IMR-90 (cell line): ENCODE measurements at regions of chr1 and their contacts with region 1.

Region 1: GRCh38 chr1:74368335-74368734 is 133.1 kb downstream of the TNNI3K start:
- DNase-seq: peak; percentile 47
- ATAC-seq: peak; percentile 75
- H3K4me3 ChIP-seq: no peak overlapping the region
- H3K27ac ChIP-seq: peak overlapping the region; percentile 73; the same call in 1 of the 2 replicates
- H3K4me1 ChIP-seq: peaks cover 2% of the 10 kb centered on the region; the same call in 1 of the 2 replicates
- H3K27me3 ChIP-seq: no peaks in the 10 kb centered on the region
- CTCF ChIP-seq: no peak
- POLR2A ChIP-seq: no peak
- RAD21 ChIP-seq: no peak

Region 2: GRCh38 chr1:74215229-74215628 is 153.1 kb before region 1 on chr1:
- CTCF ChIA-PET with region 1: no interaction called
- POLR2A ChIA-PET with region 1: no interaction called
- dilution Hi-C with region 1: no loop called
- in situ Hi-C with region 1: no loop called
- intact Hi-C with region 1: no loop called
- DNase-seq: no peak
- ATAC-seq: no peak
- H3K4me3 ChIP-seq: no peak overlapping the region
- H3K27ac ChIP-seq: no peak overlapping the region
- H3K4me1 ChIP-seq: no peaks in the 10 kb centered on the region; the same call in 1 of the 2 replicates
- H3K27me3 ChIP-seq: no peaks in the 10 kb centered on the region
- CTCF ChIP-seq: no peak
- POLR2A ChIP-seq: no peak
- RAD21 ChIP-seq: no peak

Region 3: GRCh38 chr1:74463333-74463988 is 95.1 kb after region 1 on chr1:
- CTCF ChIA-PET with region 1: no interaction called
- POLR2A ChIA-PET with region 1: no interaction called
- dilution Hi-C with region 1: no loop called
- in situ Hi-C with region 1: no loop called
- intact Hi-C with region 1: loop called (anchors 5 kb)
- DNase-seq: peak; percentile 65
- ATAC-seq: peak; percentile 60
- H3K4me3 ChIP-seq: no peak overlapping the region
- H3K27ac ChIP-seq: no peak overlapping the region
- H3K4me1 ChIP-seq: peaks cover 2% of the 10 kb centered on the region; the same call in 1 of the 2 replicates
- H3K27me3 ChIP-seq: no peaks in the 10 kb centered on the region
- CTCF ChIP-seq: no peak
- POLR2A ChIP-seq: no peak
- RAD21 ChIP-seq: no peak

Region 4: DNA sequence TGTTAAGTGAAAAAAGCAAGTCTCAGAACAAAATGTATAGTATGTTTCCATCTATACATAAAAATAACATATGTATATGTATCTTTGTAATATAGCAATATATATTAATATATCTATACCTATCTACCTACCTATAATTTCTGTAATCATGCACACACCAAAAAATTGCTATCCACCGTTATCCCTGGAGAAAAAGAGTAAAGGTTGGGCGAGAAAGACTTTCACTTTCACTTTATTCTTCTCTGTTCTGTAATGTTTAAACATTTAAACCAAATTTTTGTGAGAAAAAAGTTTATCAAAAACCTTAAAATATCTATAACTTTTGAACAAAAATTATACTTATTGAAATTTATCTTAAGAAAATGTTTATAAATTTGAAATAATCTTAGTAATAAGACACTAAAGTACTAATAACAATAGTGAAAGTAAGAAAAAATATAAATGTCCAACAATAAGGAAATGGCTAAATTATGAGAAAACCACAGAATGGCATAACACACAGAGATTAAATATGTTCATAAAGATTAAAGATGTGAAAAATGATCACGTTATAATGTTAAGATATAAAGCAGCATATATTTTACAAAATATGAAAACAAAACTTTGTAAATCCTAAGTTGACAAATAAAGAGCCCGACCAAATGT is 218.0 kb after region 1 on chr1:
- CTCF ChIA-PET with region 1: no interaction called
- POLR2A ChIA-PET with region 1: no interaction called
- dilution Hi-C with region 1: no loop called
- in situ Hi-C with region 1: no loop called
- intact Hi-C with region 1: no loop called
- DNase-seq: no peak
- ATAC-seq: no peak
- H3K4me3 ChIP-seq: no peak overlapping the region; the same call in 1 of the 2 replicates
- H3K27ac ChIP-seq: no peak overlapping the region
- H3K4me1 ChIP-seq: no peaks in the 10 kb centered on the region
- H3K27me3 ChIP-seq: no peaks in the 10 kb centered on the region
- CTCF ChIP-seq: no peak
- POLR2A ChIP-seq: no peak
- RAD21 ChIP-seq: no peak